Posterior cingulate gyrus (tissue), 11 donors: ENCODE measurements at regions of chr3 and their contacts with region 1.

Region 1: DNA sequence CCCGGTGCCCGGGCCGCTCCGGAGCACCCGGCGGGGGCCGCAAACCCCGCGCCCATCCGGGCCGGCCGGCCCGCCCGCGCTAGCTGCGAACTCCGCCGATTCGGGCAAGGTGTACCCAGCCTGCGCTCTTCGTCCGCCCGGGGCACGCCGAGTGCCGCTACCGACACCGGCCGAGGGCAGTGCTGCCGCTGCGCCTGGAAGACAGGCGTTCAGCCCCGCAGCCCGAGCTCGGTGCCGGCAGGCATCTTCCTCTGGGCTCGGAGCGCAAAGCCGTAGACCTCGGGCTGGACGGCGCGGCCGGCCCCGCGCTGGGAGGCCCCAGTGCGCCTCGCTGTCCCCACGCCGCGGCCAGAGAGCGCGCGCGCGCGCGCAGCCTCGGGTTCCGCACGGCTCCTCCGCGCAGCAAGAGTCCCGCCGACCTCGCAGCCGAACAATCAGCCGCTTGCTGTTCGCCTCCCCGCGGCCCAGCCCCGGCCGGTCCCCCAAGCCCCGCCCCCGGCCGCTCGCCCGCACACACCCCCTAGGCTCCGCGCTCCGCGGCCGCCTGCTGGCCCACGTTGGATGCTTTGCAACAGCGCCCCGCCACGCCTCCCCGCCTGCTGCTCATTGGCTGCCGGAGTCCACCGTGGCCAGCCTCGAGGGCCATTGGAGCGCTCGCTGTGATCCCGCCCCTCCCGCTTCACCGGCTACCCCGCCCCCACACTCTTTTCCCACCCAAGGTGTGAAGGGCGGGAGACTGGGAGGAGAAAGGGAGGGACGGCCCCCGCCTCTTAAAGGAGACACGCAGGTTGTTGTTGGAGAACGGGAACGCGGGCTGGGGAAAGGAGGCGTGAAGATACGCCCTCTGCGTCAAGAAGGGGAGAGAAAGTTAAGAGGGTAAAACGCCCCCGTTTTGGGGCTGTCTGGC is at the start of gene LRIG1:
- DNase-seq: peak; percentile 99 to 100 (median 100)

Region 2: GRCh38 chr3:66276705-66277274 is 224.0 kb before region 1 on chr3:
- intact Hi-C with region 1: loop called (anchors 10 kb)
- DNase-seq: peak in 4 of 10 donors; percentile 36 to 65 (median 60)

Region 3: DNA sequence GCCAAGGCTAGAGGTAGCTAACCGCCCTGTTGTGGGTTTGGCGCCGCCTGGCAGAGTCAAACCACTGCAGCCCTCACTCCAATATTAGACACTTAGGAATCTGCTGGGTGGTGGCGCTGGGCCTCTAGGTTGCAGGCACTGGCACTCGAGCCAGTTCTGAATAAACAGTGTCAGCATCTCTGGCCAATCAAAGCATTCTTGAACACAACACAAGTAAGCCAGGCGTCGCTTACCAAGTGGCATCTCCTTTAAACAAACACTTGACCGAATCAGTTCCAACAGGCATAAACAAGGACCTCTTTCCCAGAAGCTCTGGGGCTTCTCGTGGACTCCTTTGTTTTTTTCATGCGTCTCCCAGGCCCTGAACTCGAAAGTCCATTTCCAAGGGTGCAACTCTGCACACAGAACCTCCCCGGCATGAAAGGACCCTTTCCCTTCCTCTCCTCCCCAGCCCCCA is 82.3 kb before region 1 on chr3:
- intact Hi-C with region 1: loop called (anchors 5 kb)
- DNase-seq: peak; percentile 46 to 94 (median 64)

Region 4: GRCh38 chr3:66450390-66451022 is 50.3 kb before region 1 on chr3:
- intact Hi-C with region 1: loop called (anchors 5 kb)
- DNase-seq: peak in 3 of 10 donors; percentile 42 to 78 (median 46)

Region 5: DNA sequence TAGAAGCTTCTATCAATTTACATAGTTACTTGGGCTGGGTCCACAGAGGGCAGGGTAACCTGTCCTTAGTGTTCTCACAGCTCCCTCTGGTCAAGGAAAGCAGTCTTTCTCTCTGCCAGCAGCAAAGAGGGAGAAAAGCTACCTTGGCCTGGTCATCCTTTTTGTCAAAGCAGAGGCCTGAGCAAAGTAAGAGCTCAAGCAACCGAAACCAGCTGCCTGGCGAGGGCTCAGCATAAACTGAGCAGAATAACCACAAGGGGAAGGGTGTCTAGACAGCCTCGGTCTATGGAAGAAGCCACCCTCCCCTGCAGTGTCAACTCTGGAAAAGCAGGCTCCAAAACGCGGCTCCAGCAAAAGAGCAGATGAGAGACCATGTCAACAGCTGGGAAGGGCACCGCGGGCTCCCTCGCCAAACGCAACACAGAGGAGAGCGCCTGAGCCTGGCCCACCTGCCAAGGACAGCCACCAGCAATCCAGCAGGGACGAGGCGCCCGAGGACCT is 17.4 kb before region 1 on chr3:
- intact Hi-C with region 1: loop called (anchors 2 kb)
- DNase-seq: peak in 9 of 10 donors; percentile 17 to 89 (median 40)

Region 6: GRCh38 chr3:66816090-66816761 is 315.4 kb after region 1 on chr3:
- intact Hi-C with region 1: loop called (anchors 5 kb)
- DNase-seq: no peak